AG04449 (cell line): ENCODE measurements at regions of chr2 and their contacts with region 1.

Region 1: GRCh38 chr2:224284134-224284946 is 117.6 kb downstream of the FAM124B start:
- DNase-seq: no peak
- H3K4me3 ChIP-seq: no peak overlapping the region
- CTCF ChIP-seq: peak; percentile 45

Region 2: GRCh38 chr2:223976635-223977226 is 307.6 kb before region 1 on chr2:
- CTCF ChIA-PET with region 1: interaction called, 365 read pairs
- POLR2A ChIA-PET with region 1: no interaction called
- DNase-seq: no peak
- H3K4me3 ChIP-seq: no peak overlapping the region
- CTCF ChIP-seq: no peak

Region 3: GRCh38 chr2:224017957-224018356 is 266.4 kb before region 1 on chr2:
- CTCF ChIA-PET with region 1: interaction called, 13 read pairs
- POLR2A ChIA-PET with region 1: no interaction called
- DNase-seq: no peak
- H3K4me3 ChIP-seq: no peak overlapping the region
- CTCF ChIP-seq: no peak

Region 4: DNA sequence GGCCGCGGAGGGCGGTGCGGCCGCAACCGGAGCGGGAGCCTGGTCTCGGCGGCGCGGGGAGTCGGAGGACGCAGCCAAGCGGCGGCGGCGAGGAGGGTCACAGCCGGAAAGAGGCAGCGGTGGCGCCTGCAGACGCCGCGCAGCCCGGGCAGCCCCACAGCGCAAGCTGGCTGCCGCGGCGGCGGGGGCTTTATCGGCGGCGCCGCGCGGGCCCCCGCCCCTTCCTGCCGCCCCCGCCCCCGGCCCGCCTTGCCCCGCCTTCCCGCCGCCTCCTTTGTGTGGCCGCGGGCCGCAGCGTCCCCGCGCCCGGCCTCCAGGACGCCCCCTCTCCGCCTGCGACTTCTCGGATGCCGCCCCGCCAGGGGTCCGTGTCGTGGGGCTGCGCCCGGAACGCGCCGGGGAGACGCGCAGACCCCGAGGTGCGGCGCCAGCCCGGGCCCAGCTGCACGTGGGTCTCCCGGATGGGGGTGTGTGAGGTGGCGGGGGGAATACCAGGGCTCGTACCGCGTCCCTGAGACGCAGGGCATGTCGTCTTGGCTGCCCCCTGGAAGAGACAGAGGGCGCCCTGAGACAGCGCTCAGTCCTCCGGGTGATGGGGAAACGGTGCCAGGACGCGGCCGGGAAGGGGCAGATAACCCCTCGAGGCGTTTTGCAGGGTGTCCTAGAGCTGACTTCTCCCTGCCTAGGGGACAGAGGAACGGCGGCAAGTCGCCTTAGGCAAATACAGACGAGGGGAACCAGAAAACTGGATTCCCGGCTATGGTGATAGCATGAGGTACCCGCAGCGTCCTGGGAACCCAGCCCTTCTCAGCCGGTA is 245.0 kb before region 1 on chr2 and contains the start of gene SERPINE2:
- CTCF ChIA-PET with region 1: interaction called, 68 read pairs
- POLR2A ChIA-PET with region 1: interaction called, 4 read pairs
- DNase-seq: no peak
- H3K4me3 ChIP-seq: peak within 1 kb of the TSS; percentile 72
- CTCF ChIP-seq: peak; percentile 70

Region 5: DNA sequence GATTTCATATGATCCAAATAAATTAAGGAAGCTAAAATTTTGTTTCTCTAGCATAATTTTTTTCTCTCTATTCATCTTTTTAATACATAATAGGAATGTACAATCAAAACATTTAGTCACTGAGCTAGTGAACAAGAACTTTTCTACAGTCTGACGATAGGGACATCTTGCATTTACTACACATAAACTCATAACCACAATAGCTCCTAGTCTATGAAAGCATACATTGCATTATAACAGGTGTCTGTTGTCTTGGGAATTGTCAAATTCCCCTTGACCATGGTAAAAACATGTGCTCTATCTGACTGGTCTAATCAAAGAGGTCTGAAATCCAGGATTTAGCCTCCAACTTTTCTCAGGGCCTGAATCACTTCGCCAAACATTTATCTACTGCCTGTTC is 27.2 kb before region 1 on chr2:
- CTCF ChIA-PET with region 1: interaction called, 10 read pairs
- POLR2A ChIA-PET with region 1: no interaction called
- DNase-seq: no peak
- H3K4me3 ChIP-seq: no peak overlapping the region
- CTCF ChIP-seq: no peak

Region 6: GRCh38 chr2:224436634-224437033 is 152.3 kb after region 1 on chr2:
- CTCF ChIA-PET with region 1: no interaction called
- POLR2A ChIA-PET with region 1: no interaction called
- DNase-seq: no peak
- H3K4me3 ChIP-seq: no peak overlapping the region
- CTCF ChIP-seq: no peak